SK-N-SH (cell line): ENCODE measurements at regions of chr2 and their contacts with region 1.

Region 1: DNA sequence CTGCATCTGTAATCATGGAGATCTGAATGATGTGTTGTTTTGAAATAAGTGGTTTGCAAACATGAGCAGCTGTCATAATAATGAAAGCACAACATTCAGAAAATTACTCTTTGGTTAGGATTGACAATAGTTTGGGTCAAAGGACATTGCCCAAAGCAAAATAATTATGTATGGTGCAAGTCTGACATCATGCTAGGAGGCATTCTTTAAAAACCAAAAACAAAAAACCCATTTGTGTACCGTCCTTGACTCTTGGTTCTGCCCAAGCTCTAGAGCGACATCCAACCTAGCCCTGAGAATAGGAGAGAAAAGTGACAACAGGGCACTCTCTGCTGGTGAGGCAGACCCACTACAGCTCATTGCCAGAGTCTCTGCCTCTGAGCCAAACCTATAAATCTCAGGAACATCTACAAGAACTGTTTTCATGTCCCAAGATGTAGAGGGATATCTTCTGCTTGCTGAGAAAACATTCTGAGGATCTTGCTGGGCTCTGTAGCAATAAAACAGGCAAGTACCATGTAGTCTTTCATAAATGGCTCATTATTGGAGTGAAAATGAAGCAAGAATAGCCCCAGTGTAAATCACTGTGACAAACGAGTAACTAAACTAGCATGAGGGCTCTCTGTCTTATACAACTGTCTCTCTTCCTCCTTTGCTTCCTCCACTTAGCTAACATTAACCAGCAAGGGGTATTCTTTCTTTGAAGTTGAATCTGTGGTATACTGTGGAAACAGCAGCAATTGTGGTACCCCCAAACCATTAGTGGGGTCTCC is 266.8 kb upstream of the CXCR4 start:
- DNase-seq: peak; percentile 45
- H3K4me3 ChIP-seq: no peak overlapping the region
- H3K27ac ChIP-seq: no peak overlapping the region
- H3K4me1 ChIP-seq: no peaks in the 10 kb centered on the region; a peak in 1 of 4 replicates
- H3K27me3 ChIP-seq: no peaks in the 10 kb centered on the region
- CTCF ChIP-seq: peak; percentile 45
- EP300 ChIP-seq: no peak
- RAD21 ChIP-seq: peak; percentile 83

Region 2: GRCh38 chr2:135925571-135925970 is 459.1 kb before region 1 on chr2:
- CTCF ChIA-PET with region 1: interaction called, 11 read pairs
- POLR2A ChIA-PET with region 1: no interaction called
- DNase-seq: no peak
- H3K4me3 ChIP-seq: no peak overlapping the region
- H3K27ac ChIP-seq: no peak overlapping the region
- H3K4me1 ChIP-seq: peaks cover 0 to 5% of the 10 kb centered on the region in 2 experiments; a peak in 1 of 4 replicates
- H3K27me3 ChIP-seq: no peaks in the 10 kb centered on the region
- CTCF ChIP-seq: no peak
- EP300 ChIP-seq: no peak
- RAD21 ChIP-seq: no peak